ENCODE measurements at regions of chr6 and their contacts with region 1.

Region 1: GRCh38 chr6:152206072-152206818 is 398.8 kb downstream of the ESR1 start:
- DNase-seq: peak; percentile 64
- H3K4me3 Mint-ChIP-seq: no peak overlapping the region
- H3K27ac Mint-ChIP-seq: no peak overlapping the region
- H3K4me1 Mint-ChIP-seq: peaks cover 3% of the 10 kb centered on the region
- H3K27me3 Mint-ChIP-seq: no peaks in the 10 kb centered on the region

Region 2: DNA sequence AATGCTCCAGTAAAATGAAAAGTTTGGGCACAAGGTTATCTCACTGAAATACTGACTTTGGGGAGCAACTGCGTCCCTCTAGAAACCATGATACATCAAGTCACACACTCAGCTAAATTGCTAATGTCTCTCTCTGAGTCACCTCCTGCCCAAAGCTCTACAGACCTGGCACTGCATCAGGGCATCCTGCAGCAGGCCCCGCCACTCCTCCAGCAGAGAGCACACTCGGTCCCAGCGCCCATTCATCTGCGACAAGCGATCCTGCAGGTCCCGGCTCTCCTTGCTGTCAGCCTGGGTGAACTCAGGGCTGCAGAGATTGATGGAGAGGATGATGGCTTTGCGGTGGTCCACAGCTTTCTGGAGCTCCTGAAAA is 69.8 kb before region 1 on chr6:
- CTCF ChIA-PET with region 1: no interaction called
- POLR2A ChIA-PET with region 1: no interaction called
- intact Hi-C with region 1: no loop called
- DNase-seq: no peak
- H3K4me3 Mint-ChIP-seq: no peak overlapping the region
- H3K27ac Mint-ChIP-seq: no peak overlapping the region
- H3K4me1 Mint-ChIP-seq: no peaks in the 10 kb centered on the region
- H3K27me3 Mint-ChIP-seq: no peaks in the 10 kb centered on the region

Region 3: DNA sequence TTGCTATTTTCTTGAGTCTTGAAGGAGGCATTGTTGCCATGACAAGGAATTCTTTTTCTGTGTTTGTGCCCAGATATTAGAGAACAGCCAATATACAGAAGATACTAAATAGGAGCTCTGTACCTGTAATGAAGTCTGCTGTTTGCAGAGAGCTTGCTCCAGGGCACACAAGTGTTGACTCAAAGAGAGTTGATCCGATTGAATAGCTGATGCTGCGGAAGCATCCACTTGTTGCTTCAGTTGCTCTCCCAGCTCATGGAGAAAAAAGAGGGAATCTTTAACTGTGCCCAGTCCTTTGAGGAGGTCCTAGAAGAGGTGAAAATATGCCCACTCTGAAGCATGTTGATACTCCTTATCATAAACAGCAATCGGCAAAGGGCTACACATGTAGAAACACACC is 12.6 kb after region 1 on chr6:
- CTCF ChIA-PET with region 1: interaction called, 10 read pairs
- POLR2A ChIA-PET with region 1: interaction called, 3 read pairs
- intact Hi-C with region 1: no loop called
- DNase-seq: no peak
- H3K4me3 Mint-ChIP-seq: no peak overlapping the region
- H3K27ac Mint-ChIP-seq: no peak overlapping the region
- H3K4me1 Mint-ChIP-seq: no peaks in the 10 kb centered on the region
- H3K27me3 Mint-ChIP-seq: no peaks in the 10 kb centered on the region

Region 4: DNA sequence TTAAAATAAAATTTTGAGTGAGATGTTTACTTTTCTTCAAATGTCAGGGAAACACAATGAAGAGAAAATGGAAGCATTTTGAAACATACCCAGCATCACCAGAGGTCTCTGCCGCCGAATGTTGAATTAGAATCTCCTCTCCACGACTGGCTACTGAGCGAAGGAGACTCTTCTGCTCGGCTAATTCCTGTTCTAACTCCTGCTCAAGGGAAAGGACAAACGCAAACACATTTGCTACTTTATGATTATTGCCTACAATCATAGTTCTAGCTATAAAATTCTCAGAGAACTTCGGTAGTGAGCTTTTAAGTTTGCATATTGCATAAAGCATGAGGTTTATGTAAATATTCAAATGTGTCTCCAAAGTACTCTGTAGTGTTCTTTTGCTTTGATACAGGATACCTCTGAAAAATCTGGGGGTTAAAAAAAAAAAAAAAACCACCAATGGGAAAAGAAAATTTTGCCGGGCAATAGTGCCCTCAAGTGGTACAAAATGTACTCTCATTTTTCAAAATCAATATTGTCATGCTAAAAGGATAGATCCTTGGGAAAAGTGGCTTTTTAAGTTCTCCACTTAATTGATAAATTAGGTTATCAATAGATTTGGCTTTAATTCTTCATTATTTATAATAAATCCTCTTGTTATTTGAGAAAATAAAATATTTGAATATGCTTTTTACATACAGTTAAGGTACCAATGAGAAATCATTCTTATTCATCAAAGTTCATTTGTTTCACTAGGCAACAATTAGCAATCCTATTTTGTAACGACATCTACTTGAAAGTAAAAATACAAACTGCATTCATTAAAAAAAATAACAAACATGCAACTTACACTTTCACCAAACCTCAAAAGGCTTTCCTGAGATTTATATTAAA is 62.0 kb after region 1 on chr6:
- CTCF ChIA-PET with region 1: interaction called, 3 read pairs
- POLR2A ChIA-PET with region 1: no interaction called
- intact Hi-C with region 1: loop called (anchors 1 kb)
- DNase-seq: no peak
- H3K4me3 Mint-ChIP-seq: no peak overlapping the region
- H3K27ac Mint-ChIP-seq: no peak overlapping the region
- H3K4me1 Mint-ChIP-seq: peaks cover 16% of the 10 kb centered on the region
- H3K27me3 Mint-ChIP-seq: no peaks in the 10 kb centered on the region

Region 5: GRCh38 chr6:152723398-152723797 is 517.2 kb after region 1 on chr6:
- CTCF ChIA-PET with region 1: no interaction called
- POLR2A ChIA-PET with region 1: no interaction called
- intact Hi-C with region 1: no loop called
- DNase-seq: no peak
- H3K4me3 Mint-ChIP-seq: no peak overlapping the region
- H3K27ac Mint-ChIP-seq: no peak overlapping the region
- H3K4me1 Mint-ChIP-seq: no peaks in the 10 kb centered on the region
- H3K27me3 Mint-ChIP-seq: no peaks in the 10 kb centered on the region

Measured in activated CD4-positive, alpha-beta memory T cell treated with anti-CD3 and anti-CD28 coated beads for 36 hours (primary cell).